WTC11 (cell line): ENCODE measurements at regions of chr11 and their contacts with region 1.

Region 1: GRCh38 chr11:1832211-1832919 is 2.4 kb upstream of the SYT8 start:
- DNase-seq: peak; percentile 77
- ATAC-seq: peak; percentile 75
- H3K4me3 Mint-ChIP-seq: peak overlapping the region; percentile 49
- H3K27ac Mint-ChIP-seq: no peak overlapping the region
- H3K4me1 Mint-ChIP-seq: 0 out of 2 replicates have a peak, but pooled peaks cover 2% of the 10 kb centered on the region
- H3K27me3 Mint-ChIP-seq: peaks cover 5% of the 10 kb centered on the region
- CTCF ChIP-seq: peak; percentile 97

Region 2: DNA sequence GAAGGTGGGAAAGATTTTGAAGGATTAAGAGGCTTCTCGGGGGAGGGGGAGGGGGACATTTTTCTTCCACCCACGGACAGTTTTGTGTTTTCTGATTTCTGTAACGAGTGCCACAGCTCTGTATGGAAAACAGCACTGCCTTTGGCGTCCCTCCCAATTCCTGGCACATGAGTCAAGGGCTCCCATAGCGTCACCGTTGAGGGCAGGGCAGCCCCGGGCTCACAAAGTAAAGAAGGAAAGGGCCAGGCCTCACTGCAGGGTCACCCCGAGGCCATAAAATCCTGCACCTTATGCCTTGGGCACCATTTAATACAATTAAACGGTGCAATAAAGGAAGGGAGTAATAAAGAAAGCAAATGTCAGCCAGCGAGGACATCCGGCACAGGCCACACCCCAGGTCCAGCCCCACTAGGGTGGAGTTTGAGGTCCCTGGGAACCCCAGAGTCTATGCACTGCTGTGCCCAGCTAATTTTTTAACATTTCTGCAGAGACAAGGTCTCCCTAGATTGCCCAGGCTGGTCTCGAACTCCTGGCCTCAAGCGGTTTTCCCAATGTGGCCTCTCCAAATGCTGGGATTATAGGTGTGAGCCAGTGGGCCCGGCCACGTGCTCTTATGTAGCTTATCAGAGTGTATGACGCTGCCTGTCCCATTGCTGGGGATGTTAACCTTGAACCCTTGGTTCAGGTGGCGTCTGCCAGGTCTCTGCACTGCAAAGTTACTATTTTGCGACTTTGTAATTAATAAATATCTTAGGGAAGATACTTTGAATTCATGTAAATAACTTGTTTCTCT is 771.3 kb before region 1 on chr11:
- CTCF ChIA-PET with region 1: no interaction called
- POLR2A ChIA-PET with region 1: no interaction called
- DNase-seq: no peak
- ATAC-seq: no peak
- H3K4me3 Mint-ChIP-seq: no peak overlapping the region
- H3K27ac Mint-ChIP-seq: no peak overlapping the region
- H3K4me1 Mint-ChIP-seq: no peaks in the 10 kb centered on the region; the same call in 1 of the 2 replicates
- H3K27me3 Mint-ChIP-seq: peaks cover 12% of the 10 kb centered on the region
- CTCF ChIP-seq: no peak

Region 3: DNA sequence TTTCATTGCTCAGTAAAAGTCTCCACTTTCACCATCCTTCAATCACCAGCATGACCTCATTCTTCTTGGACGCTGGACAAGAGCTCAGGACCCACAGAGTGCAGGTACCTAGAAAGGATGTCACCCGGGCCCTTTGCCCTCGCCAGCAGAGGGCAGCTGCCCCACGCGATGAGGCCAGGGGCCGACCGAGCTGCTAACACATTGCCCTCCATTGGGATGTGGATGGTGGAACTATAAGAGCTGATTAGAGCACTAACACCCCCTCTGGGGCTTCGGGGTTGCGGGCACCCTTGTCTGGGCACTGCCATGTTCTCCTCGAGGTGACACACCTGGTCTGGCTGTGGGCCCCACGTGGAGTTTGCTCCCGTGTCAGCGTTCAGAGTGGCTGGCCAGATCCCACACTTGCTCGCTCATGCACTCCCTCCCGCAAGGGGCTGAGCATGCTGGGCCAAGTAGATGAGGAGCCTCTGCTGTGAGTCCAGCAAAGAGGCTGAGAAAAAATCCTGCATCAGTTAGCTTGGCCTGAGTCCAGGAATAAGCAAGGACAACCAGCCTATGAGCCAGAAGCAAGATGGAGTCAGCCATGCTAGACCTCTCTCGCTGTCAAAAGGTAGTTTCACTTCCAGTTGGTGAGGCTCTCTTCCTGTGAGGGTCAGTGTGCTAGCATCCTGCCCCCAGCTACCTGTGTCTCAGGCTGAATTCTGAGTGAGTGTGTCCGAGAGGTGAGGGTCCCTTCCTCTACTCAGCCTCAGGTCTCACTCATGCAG is 125.5 kb before region 1 on chr11:
- CTCF ChIA-PET with region 1: interaction called, 20 read pairs
- POLR2A ChIA-PET with region 1: no interaction called
- DNase-seq: peak; percentile 36
- ATAC-seq: no peak; the same call in 1 of the 2 replicates
- H3K4me3 Mint-ChIP-seq: no peak overlapping the region
- H3K27ac Mint-ChIP-seq: no peak overlapping the region
- H3K4me1 Mint-ChIP-seq: no peaks in the 10 kb centered on the region
- H3K27me3 Mint-ChIP-seq: peaks cover 58% of the 10 kb centered on the region
- CTCF ChIP-seq: no peak

Region 4: DNA sequence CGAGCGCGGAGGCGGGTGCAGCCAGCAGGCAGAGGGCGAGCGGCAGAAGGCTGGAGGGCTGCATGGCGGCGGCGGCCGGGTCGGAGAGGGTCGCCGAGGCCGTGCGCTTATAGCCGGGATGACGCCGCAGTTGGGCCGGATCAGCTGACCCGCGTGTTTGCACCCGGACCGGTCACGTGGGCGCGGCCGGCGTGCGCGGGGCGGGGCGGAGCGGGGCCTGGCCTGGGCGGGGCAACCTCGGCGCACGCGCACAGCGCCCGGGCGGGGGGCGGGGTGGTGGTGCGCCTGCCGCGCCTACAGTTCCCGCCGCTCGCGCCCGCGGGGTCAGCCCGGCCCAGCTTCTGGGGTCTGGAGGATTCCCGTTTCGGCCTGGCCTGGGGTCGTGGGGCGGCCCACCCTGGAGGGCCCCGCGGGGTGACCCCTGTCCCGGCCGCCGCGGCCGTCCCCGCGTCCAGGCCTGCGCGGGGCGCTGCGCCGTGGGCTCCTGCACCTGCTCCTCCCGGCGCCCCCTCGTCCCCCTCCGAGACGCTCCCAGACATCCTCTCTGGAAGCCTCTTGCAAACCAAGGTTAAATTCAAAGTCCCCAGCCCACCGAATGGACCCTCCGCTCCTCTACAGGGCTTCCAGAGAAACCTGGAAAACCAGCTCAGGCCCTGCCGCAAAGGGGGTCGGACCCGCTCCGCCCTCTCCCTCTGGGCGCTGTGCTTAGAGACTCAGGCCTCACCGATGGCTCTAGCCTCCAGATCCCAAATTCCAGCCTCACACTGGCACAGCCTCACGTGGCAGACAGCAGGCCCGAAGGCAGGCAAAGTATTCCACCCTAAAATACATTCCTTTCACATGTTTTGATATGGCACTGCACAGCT is 68.3 kb before region 1 on chr11 and contains the start of gene CTSD:
- CTCF ChIA-PET with region 1: interaction called, 10 read pairs
- POLR2A ChIA-PET with region 1: no interaction called
- DNase-seq: peak; percentile 87
- ATAC-seq: peak; percentile 73
- H3K4me3 Mint-ChIP-seq: peak within 1 kb of the TSS; percentile 93
- H3K27ac Mint-ChIP-seq: peak within 1 kb of the TSS; percentile 91
- H3K4me1 Mint-ChIP-seq: 0 out of 2 replicates have a peak, but pooled peaks cover 3% of the 10 kb centered on the region
- H3K27me3 Mint-ChIP-seq: 0 out of 2 replicates have a peak, but pooled peaks cover 3% of the 10 kb centered on the region
- CTCF ChIP-seq: no peak
- total RNA-seq, gene CTSD: 194 to 199 TPM (median 198 TPM) in 3 replicates

Region 5: DNA sequence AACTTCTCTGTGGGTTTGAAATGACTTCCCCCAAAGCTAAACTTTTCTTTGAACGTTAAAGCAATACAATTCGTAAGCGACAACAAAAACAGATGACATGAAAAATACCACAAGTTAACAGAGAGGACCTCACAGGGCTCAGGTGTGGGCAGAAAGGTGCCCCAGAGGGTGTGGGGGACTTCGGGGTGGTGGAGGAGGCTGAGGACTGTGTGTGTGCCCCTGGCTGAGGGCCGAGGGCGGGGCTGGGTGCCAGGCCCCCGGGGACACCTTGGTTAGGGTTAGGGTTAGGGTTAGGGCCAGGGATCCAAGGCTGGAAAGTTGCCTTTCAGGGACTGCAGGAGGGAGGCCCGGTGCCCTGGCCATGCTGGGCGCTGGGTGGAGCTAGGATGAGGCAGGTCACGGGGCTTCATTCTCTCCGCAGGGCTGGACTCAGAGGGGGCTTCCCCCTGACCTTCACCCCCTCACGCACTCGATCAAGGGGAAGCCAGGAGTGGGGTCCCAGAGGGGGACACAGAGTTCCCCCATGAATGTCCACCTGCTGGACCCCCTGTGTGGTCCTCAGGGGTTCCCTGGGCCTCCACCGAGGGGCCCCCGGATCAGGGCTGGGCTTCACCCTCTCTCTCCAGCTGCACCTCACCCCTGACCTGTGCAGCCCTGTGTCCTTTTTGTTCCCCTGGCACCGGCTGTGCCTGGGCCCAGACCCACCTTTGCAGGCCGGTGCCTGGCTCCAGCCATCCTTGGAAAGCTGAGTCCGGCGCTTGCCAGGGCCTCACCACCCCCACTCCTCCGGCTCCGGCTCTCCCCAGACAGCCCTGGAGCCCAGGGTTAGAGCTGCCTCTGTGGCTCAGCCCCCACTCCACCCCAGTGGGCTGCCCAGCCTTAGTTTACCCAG is 13.4 kb after region 1 on chr11:
- CTCF ChIA-PET with region 1: interaction called, 17 read pairs
- POLR2A ChIA-PET with region 1: interaction called, 3 read pairs
- DNase-seq: no peak
- ATAC-seq: no peak
- H3K4me3 Mint-ChIP-seq: no peak overlapping the region
- H3K27ac Mint-ChIP-seq: no peak overlapping the region
- H3K4me1 Mint-ChIP-seq: no peaks in the 10 kb centered on the region
- H3K27me3 Mint-ChIP-seq: peaks cover 2% of the 10 kb centered on the region; the same call in 1 of the 2 replicates
- CTCF ChIP-seq: no peak

Region 6: DNA sequence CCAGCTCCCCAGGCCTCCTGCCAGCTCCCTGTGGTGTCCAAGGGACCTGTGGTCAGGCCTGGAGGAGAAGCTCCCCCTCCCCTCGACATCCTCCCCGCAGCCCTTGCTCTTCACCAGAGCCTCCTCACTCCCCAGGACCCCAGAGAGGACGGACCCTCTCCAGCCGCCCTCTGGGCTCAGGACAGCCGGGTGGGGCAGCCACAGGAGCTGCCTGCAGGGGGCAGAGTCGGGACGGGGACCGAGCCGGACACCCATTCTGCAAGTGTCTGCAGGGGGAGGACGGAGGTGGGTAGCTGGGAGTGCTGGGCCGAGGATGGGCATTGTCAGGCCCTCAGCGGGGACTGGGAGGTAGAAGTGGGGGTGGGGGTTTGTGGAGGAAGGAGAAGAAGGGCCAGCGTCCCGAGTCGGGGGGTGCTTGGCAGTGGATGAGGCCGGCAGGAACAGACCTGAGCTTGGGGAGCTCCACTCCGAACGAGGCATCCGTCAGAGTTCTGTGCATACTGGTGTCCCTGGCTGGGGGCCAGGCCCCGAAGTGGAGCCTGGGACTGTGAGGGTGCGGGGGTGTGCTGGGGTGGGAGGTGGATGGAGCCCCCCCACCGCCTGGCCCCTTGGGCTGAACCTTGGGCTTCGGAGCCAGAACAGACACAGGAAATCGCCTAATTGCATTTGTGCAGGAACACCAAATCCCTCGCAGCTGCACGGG is 44.1 kb after region 1 on chr11:
- CTCF ChIA-PET with region 1: interaction called, 27 read pairs
- POLR2A ChIA-PET with region 1: no interaction called
- DNase-seq: peak; percentile 77
- ATAC-seq: peak; percentile 85
- H3K4me3 Mint-ChIP-seq: no peak overlapping the region
- H3K27ac Mint-ChIP-seq: no peak overlapping the region
- H3K4me1 Mint-ChIP-seq: 0 out of 2 replicates have a peak, but pooled peaks cover 3% of the 10 kb centered on the region
- H3K27me3 Mint-ChIP-seq: no peaks in the 10 kb centered on the region; the same call in 1 of the 2 replicates
- CTCF ChIP-seq: peak; percentile 21; the same call in 1 of the 2 replicates

Region 7: GRCh38 chr11:2002807-2003206 is 170.4 kb after region 1 on chr11:
- CTCF ChIA-PET with region 1: interaction called, 49 read pairs
- POLR2A ChIA-PET with region 1: no interaction called
- DNase-seq: no peak
- ATAC-seq: no peak
- H3K4me3 Mint-ChIP-seq: no peak overlapping the region
- H3K27ac Mint-ChIP-seq: no peak overlapping the region
- H3K4me1 Mint-ChIP-seq: no peaks in the 10 kb centered on the region
- H3K27me3 Mint-ChIP-seq: no peaks in the 10 kb centered on the region
- CTCF ChIP-seq: no peak